H1 (cell line): ENCODE measurements at regions of chrX and their contacts with region 1.

Region 1: GRCh38 chrX:21758488-21758887 is 572 bp upstream of the SMPX start:
- DNase-seq: no peak
- H3K4me3 ChIP-seq: no peak overlapping the region
- H3K27ac ChIP-seq: no peak overlapping the region
- H3K4me1 ChIP-seq: peaks cover 0 to 3% (median 0%) of the 10 kb centered on the region in 4 experiments; a peak in 1 of 7 replicates
- H3K27me3 ChIP-seq: no peaks in the 10 kb centered on the region
- CTCF ChIP-seq: no peak
- EP300 ChIP-seq: no peak
- POLR2A ChIP-seq: no peak
- RAD21 ChIP-seq: no peak

Region 2: DNA sequence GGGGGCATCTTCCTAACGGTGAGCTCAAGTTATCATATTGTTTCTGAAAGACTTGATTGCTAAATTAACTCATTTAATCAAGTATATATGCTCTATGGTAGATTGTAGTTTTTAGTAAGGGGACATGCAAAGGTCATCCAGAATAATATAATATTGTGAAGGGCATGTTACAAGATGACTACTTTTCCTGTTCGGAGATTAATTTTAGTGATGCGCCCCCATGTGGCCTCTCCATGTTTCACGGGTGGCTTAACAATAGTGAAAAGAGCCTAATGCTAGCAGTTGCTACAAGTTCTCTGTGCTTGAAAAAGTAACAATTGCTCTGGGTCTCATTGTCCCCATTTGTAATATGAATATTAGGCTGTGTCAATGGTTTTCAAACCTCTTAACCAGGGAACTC is 12.7 kb before region 1 on chrX:
- CTCF ChIA-PET with region 1: interaction called, 11 read pairs
- POLR2A ChIA-PET with region 1: no interaction called
- DNase-seq: no peak
- H3K4me3 ChIP-seq: no peak overlapping the region
- H3K27ac ChIP-seq: no peak overlapping the region
- H3K4me1 ChIP-seq: peaks cover 0 to 15% (median 0%) of the 10 kb centered on the region in 4 experiments; a peak in 1 of 7 replicates
- H3K27me3 ChIP-seq: no peaks in the 10 kb centered on the region
- CTCF ChIP-seq: peak in 2 of 3 experiments; percentile 29 to 52; a peak in 2 of 4 replicates
- EP300 ChIP-seq: no peak
- POLR2A ChIP-seq: no peak
- RAD21 ChIP-seq: peak; percentile 28 to 37; a peak in 2 of 4 replicates

Region 3: GRCh38 chrX:21770631-21771321 is 12.3 kb after region 1 on chrX:
- CTCF ChIA-PET with region 1: interaction called, 11 read pairs
- POLR2A ChIA-PET with region 1: no interaction called
- DNase-seq: peak in 1 of 2 experiments; percentile 55
- H3K4me3 ChIP-seq: no peak overlapping the region
- H3K27ac ChIP-seq: no peak overlapping the region
- H3K4me1 ChIP-seq: no peaks in the 10 kb centered on the region
- H3K27me3 ChIP-seq: no peaks in the 10 kb centered on the region
- CTCF ChIP-seq: peak; percentile 19 to 42 (median 24); a peak in 3 of 4 replicates
- EP300 ChIP-seq: no peak
- POLR2A ChIP-seq: no peak
- RAD21 ChIP-seq: peak in 1 of 2 experiments; percentile 11; a peak in 1 of 4 replicates

Region 4: DNA sequence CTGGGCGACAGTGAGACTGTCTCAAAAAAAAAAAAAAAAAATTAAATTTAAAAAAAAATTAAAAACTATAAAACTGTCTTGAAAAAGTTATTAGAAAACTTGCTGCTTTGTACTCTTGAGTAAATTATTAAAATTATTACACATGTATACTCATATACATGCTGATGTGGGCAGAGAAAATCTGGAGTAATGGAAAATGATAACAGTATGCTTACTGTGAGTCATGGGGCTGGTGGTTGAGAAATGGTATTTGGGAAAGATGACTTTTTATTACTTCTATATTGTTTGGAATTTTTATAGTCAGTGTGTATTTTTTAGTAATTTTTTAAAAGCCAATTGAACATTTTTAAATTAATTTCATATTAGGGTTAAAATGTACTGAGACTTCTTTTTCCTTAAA is 104.8 kb after region 1 on chrX:
- CTCF ChIA-PET with region 1: no interaction called
- POLR2A ChIA-PET with region 1: no interaction called
- DNase-seq: no peak
- H3K4me3 ChIP-seq: no peak overlapping the region
- H3K27ac ChIP-seq: no peak overlapping the region
- H3K4me1 ChIP-seq: no peaks in the 10 kb centered on the region
- H3K27me3 ChIP-seq: no peaks in the 10 kb centered on the region
- CTCF ChIP-seq: no peak
- EP300 ChIP-seq: no peak
- POLR2A ChIP-seq: no peak
- RAD21 ChIP-seq: no peak